CD8-positive, alpha-beta memory T cell (primary cell): ENCODE measurements at regions of chr3 and their contacts with region 1.

Region 1: DNA sequence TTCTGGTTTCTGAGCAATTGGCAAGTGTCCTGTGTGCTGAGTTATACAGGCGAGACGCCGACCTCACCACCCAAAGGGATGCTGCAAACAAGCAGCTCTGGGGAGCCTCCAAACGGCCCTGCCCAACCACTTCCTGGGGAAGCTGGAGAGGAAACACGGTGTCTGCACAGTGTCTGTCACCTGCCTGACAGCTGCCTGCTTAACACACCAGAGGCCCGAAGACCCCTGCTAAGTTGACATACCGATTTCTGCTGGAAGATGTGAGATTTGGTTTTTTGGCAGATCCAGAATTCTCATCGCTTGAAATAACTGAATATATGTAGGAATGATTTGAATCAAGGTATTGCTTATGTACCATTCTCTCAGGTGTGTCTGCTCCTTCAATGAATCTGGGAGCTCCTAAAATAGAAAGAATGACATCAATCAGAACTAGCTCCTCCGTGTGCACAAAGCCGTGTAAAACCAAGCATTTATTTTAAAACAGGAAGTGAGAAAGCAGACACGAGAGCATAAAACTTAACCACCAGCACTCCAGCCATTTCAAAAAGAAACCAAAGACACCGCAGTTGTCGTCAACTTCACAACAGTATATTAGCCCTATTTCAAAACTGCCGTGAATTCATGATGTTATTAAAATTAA is 27.2 kb downstream of the LRRC2 start:
- DNase-seq: peak; percentile 79 to 96 (median 87)
- H3K4me3 ChIP-seq: peak overlapping the region; percentile 37
- H3K4me3 Mint-ChIP-seq: peak overlapping the region; percentile 57 to 79 (median 71)
- H3K27ac ChIP-seq: peak overlapping the region; percentile 58
- H3K27ac Mint-ChIP-seq: peak overlapping the region; percentile 85 to 99 (median 94)
- H3K4me1 ChIP-seq: peaks cover 44% of the 10 kb centered on the region
- H3K4me1 Mint-ChIP-seq: peaks cover 37 to 76% (median 71%) of the 10 kb centered on the region in 3 donors
- H3K27me3 ChIP-seq: no peaks in the 10 kb centered on the region
- H3K27me3 Mint-ChIP-seq: peaks cover 0 to 6% of the 10 kb centered on the region in 2 donors

Region 2: GRCh38 chr3:46496741-46497554 is 42.0 kb before region 1 on chr3:
- CTCF ChIA-PET with region 1: interaction called, 69 read pairs
- POLR2A ChIA-PET with region 1: no interaction called
- DNase-seq: peak in 4 of 5 donors; percentile 16 to 70 (median 26)
- H3K4me3 ChIP-seq: no peak overlapping the region
- H3K4me3 Mint-ChIP-seq: no peak overlapping the region
- H3K27ac ChIP-seq: no peak overlapping the region
- H3K27ac Mint-ChIP-seq: peak overlapping the region in 2 of 8 donors; percentile 33 to 60
- H3K4me1 ChIP-seq: peaks cover 5% of the 10 kb centered on the region
- H3K4me1 Mint-ChIP-seq: peaks cover 4 to 20% (median 19%) of the 10 kb centered on the region in 3 donors
- H3K27me3 ChIP-seq: no peaks in the 10 kb centered on the region
- H3K27me3 Mint-ChIP-seq: no peaks in the 10 kb centered on the region

Region 3: DNA sequence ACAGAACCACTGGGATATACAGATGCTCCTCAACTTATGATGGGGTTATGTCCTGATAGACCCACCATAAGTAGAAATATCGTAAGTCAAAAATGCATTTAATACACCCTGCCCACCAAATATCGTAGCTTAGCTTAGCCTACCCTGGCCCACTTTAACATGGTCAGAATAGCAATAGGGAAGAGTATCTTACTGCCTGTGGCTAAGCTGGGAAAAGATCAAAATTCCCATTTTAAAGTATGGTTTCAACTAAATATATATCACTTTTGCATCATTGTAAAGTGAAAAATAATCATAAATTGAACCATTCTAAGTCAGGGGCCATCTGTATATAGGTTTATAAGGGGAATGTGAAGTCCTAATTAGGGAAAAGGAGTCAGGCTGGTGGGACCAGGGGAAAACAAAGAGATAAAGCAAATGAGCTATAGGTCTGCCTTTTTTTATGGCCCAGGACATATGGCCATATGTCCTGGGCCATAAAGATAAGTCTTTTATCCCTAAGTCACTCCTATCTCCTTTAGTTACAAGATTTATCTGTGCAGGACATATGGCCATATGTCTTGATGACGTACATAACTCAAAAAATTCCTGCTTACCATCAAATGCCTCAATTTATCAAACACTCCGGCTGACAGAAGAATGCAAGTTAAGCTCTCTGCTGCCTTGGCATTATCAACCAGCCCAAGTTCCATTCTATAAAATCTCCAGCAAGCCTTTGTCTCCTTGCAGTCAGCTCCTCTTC is 29.9 kb before region 1 on chr3:
- CTCF ChIA-PET with region 1: no interaction called
- POLR2A ChIA-PET with region 1: no interaction called
- DNase-seq: no peak
- H3K4me3 ChIP-seq: no peak overlapping the region
- H3K4me3 Mint-ChIP-seq: no peak overlapping the region
- H3K27ac ChIP-seq: peak overlapping the region; percentile 65
- H3K27ac Mint-ChIP-seq: no peak overlapping the region
- H3K4me1 ChIP-seq: no peaks in the 10 kb centered on the region
- H3K4me1 Mint-ChIP-seq: peaks cover 5 to 15% (median 11%) of the 10 kb centered on the region in 3 donors
- H3K27me3 ChIP-seq: no peaks in the 10 kb centered on the region
- H3K27me3 Mint-ChIP-seq: peaks cover 1 to 7% of the 10 kb centered on the region in 2 donors

Region 4: DNA sequence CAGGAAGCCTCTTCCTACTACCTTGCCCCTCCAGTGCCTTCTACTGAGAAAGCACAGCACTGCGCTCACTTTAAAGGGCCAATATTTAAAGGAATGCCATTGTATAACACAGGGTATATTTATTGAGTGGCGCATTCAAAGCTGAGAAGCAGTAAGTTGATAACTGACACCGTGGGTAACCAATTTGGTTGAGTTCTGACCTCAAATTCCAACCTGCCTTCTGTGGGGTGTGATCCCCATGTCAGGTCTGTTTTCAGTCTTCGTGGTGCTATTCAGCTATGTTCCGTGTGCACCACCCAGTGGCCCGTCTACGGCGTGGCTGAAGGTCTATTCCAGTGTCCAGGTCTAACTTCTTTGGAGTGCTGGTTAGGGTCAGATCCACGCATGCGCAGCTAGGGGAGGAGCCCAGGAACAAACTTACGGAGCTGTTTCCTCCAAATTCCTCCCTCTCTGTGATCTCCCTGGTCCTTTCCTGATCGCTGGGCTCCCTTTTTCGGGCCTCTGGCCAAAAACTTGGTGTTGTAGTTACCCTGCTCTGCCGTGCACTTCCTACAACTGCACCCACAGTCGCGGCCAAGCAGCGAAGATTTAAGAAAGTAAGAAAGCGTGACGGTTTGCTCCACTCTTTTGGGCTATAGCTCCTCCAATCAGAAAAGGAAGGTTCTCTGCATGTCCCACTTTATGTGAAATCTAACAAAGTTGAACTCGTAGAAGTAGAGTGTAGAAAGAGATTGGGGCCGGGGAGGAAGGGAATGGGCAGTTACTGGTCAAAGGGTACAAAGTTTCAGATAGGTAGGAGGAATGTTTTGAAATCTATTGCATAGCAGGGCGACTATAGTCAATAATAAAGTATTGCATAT is 19.5 kb after region 1 on chr3:
- CTCF ChIA-PET with region 1: interaction called, 23 read pairs
- POLR2A ChIA-PET with region 1: interaction called, 7 read pairs
- DNase-seq: peak; percentile 35 to 88 (median 68)
- H3K4me3 ChIP-seq: peak overlapping the region; percentile 56
- H3K4me3 Mint-ChIP-seq: peak overlapping the region; percentile 11 to 83 (median 71)
- H3K27ac ChIP-seq: no peak overlapping the region
- H3K27ac Mint-ChIP-seq: peak overlapping the region in 5 of 8 donors; percentile 21 to 54 (median 47)
- H3K4me1 ChIP-seq: peaks cover 11% of the 10 kb centered on the region
- H3K4me1 Mint-ChIP-seq: peaks cover 9 to 24% (median 24%) of the 10 kb centered on the region in 3 donors
- H3K27me3 ChIP-seq: no peaks in the 10 kb centered on the region
- H3K27me3 Mint-ChIP-seq: peaks cover 3 to 6% of the 10 kb centered on the region in 2 donors

Region 5: DNA sequence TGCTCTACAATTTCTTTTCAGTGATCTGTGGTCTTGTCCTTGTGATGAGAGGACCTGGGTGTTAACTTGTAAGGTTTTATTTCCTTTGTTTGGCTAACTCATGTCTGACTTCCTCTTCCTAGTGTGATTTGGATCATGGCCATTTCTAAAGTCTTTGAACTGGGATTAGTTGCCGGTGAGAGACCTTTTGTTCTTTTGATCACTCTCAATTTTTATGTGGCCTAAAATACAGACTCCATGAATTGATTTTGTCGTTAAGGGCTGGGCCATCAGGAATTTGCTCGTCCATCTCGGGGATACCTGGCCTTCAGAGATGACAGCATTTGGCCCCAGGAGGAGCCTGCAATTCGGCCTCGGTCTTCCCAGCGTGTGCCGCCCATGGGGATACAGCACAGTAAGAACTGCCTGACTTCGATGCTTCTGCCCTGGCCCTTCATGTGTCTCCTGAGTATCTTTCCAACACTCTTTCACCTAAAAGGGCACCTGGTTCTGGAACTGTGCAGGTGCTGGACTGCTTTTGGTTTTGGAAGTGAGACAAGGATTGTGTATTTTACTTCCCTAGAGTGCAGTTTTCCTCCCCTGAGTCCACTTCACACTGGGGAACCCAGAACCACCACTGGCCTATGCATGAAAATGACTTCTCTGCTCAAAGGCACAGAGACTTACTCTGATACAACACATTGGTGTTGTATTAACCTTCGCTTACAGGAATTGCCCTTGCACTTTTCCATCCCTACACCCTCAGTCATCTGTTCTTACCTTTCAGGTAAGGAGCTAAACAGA is 40.2 kb after region 1 on chr3:
- CTCF ChIA-PET with region 1: no interaction called
- POLR2A ChIA-PET with region 1: no interaction called
- DNase-seq: no peak
- H3K4me3 ChIP-seq: no peak overlapping the region
- H3K4me3 Mint-ChIP-seq: no peak overlapping the region
- H3K27ac ChIP-seq: no peak overlapping the region
- H3K27ac Mint-ChIP-seq: no peak overlapping the region
- H3K4me1 ChIP-seq: peaks cover 4% of the 10 kb centered on the region
- H3K4me1 Mint-ChIP-seq: peaks cover 3 to 9% (median 7%) of the 10 kb centered on the region in 3 donors
- H3K27me3 ChIP-seq: no peaks in the 10 kb centered on the region
- H3K27me3 Mint-ChIP-seq: peaks cover 5 to 22% of the 10 kb centered on the region in 2 donors